Activated B cell treated with CpG ODN at 0.5 μM for 24 hours (primary cell): ENCODE measurements at regions of chrX and their contacts with region 1.

Region 1: GRCh38 chrX:2690856-2691542 is at the start of gene CD99:
- DNase-seq: peak; percentile 92
- ATAC-seq: peak; percentile 92
- H3K4me3 Mint-ChIP-seq: peak within 1 kb of the TSS; percentile 89
- H3K27ac Mint-ChIP-seq: peak within 1 kb of the TSS; percentile 82
- H3K4me1 Mint-ChIP-seq: peaks cover 43% of the 10 kb centered on the region
- H3K27me3 Mint-ChIP-seq: no peaks in the 10 kb centered on the region
- CTCF ChIP-seq: no peak
- total RNA-seq, gene CD99: 86.4 and 102 TPM in 2 replicates

Region 2: DNA sequence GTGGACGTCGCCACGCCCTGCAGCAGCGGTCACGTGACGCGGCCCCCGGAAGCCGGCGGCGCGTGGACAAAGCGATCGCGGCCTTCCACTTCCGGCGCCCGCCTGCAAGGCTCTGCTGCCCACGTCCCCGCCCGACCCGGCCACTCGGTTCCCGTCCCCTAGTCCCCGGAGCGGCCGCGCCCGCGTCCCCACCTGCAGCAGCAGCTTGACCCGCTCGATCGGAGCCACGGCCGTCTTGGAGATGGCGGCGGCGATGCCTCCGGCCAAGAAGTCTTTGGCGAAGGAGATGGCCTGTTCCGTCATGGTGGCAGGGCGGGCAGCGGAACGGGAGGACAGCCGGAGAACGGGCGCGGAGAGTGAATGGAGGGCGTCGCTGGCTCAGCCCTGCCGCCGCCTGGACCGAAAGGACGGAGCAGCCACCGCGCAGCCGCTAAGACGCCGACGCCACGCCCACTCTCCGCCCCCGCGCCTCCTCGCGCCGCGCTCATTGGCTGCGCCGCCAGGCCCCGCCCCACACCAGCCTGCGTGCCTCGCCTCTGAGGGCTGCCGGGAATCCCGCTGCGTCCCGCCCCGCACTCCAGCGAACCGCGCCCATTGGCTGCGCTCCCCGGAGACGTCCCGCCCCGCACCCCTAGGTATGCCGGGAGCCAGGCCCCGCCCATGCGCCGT is 1299.2 kb before region 1 on chrX and contains the start of gene SLC25A6:
- CTCF ChIA-PET with region 1: no interaction called
- POLR2A ChIA-PET with region 1: no interaction called
- intact Hi-C with region 1: loop called (anchors 5 kb)
- DNase-seq: peak; percentile 100
- ATAC-seq: peak; percentile 96
- H3K4me3 Mint-ChIP-seq: peak within 1 kb of the TSS; percentile 93
- H3K27ac Mint-ChIP-seq: peak within 1 kb of the TSS; percentile 93
- H3K4me1 Mint-ChIP-seq: peaks cover 47% of the 10 kb centered on the region
- H3K27me3 Mint-ChIP-seq: no peaks in the 10 kb centered on the region
- CTCF ChIP-seq: no peak
- total RNA-seq, gene SLC25A6: 436 and 472 TPM in 2 replicates

Region 3: GRCh38 chrX:2500267-2501075 is 190.5 kb before region 1 on chrX and contains the starts of genes DHRSX and ZBED1:
- CTCF ChIA-PET with region 1: no interaction called
- POLR2A ChIA-PET with region 1: no interaction called
- intact Hi-C with region 1: loop called (anchors 5 kb)
- DNase-seq: peak; percentile 63
- ATAC-seq: peak; percentile 77
- H3K4me3 Mint-ChIP-seq: peak within 1 kb of the TSS; percentile 82
- H3K27ac Mint-ChIP-seq: peak within 1 kb of the TSS; percentile 74
- H3K4me1 Mint-ChIP-seq: peaks cover 33% of the 10 kb centered on the region
- H3K27me3 Mint-ChIP-seq: no peaks in the 10 kb centered on the region
- CTCF ChIP-seq: no peak
- total RNA-seq, gene DHRSX: 23.2 and 28.3 TPM in 2 replicates
- total RNA-seq, gene ZBED1: 49.5 and 50.1 TPM in 2 replicates

Region 4: GRCh38 chrX:2707334-2707760 is 16.3 kb after region 1 on chrX:
- CTCF ChIA-PET with region 1: no interaction called
- POLR2A ChIA-PET with region 1: no interaction called
- intact Hi-C with region 1: loop called (anchors 1 kb)
- DNase-seq: peak; percentile 51
- ATAC-seq: peak; percentile 90
- H3K4me3 Mint-ChIP-seq: peak overlapping the region; percentile 69
- H3K27ac Mint-ChIP-seq: peak overlapping the region; percentile 93
- H3K4me1 Mint-ChIP-seq: peaks cover 71% of the 10 kb centered on the region
- H3K27me3 Mint-ChIP-seq: no peaks in the 10 kb centered on the region
- CTCF ChIP-seq: no peak

Region 5: DNA sequence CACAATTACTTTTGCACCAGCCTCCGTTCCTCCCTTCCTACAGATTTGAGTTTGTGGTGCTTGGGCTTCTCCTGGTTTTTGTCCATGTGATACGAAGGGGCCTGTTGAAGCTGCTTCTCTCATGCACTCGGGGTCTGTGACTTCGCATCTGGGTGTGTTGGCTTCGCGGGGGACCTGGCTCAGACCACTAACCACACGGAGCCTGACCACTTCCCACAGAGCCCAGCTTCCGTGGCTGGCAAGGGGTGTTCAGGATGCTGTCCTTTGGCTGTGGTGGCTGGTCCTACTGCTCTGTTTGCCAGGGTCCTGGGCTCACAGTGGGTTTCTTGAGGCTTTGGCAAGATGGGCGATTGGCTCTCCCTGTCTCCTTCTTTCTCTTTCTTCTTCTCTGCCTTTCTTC is 41.1 kb after region 1 on chrX:
- CTCF ChIA-PET with region 1: no interaction called
- POLR2A ChIA-PET with region 1: no interaction called
- intact Hi-C with region 1: loop called (anchors 5 kb)
- DNase-seq: no peak
- ATAC-seq: no peak
- H3K4me3 Mint-ChIP-seq: no peak overlapping the region
- H3K27ac Mint-ChIP-seq: no peak overlapping the region
- H3K4me1 Mint-ChIP-seq: no peaks in the 10 kb centered on the region
- H3K27me3 Mint-ChIP-seq: no peaks in the 10 kb centered on the region
- CTCF ChIP-seq: no peak

Region 6: DNA sequence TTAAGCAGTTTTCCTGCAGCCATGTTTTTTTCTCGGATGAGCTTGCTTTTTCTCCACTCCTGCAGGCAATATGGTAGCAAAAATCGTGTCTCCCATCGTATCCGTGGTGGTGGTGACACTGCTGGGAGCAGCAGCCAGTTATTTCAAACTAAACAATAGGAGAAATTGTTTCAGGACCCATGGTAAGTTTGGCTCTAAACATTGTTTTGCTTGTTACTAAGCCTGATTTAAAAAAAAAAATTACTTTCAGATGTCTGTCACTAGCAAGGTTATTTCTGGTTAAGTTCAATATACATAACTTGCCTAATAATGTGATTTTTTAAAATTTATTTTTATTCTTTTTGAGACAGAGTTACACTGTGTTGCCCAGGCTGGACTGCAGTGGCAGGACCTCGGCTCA is 120.3 kb after region 1 on chrX:
- CTCF ChIA-PET with region 1: no interaction called
- POLR2A ChIA-PET with region 1: no interaction called
- intact Hi-C with region 1: loop called (anchors 5 kb)
- DNase-seq: no peak
- ATAC-seq: no peak
- H3K4me3 Mint-ChIP-seq: no peak overlapping the region
- H3K27ac Mint-ChIP-seq: no peak overlapping the region
- H3K4me1 Mint-ChIP-seq: peaks cover 3% of the 10 kb centered on the region
- H3K27me3 Mint-ChIP-seq: peaks cover 11% of the 10 kb centered on the region
- CTCF ChIP-seq: no peak

Region 7: DNA sequence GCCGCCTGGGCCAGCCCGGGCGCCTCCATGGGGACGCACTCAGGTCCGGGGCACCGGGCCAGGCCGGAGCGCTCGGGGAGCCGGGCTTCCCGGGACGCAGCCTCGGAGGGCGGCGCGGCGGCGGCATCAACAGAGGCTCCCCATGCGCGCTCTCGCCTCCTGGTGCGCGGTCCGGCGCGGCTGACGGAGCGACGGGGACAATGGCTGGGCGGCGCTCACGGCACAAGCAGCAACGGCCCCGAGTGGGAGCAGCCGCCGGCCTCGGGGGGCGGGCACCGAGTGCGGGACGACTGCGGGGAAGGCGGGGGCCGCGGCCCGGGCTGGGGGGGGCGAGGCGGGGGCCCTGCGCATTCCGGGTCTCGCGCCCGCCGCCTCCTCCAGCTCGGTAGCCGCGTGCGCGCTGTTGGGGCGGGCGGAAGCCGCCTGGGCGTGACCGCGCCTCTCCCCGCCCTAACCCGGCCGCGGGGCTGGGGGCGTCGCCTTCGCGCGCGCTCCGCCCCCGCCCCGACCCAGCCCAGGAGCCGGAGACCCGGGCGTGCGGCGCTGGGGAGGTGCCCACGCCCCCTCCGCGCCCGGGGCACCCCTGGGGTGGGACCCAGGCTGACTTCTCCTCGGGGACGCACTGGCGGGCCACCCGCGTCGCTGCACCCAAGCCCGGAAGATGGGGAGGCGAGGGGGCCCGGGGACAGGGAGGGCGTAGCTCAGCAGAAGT is 1022.4 kb after region 1 on chrX and contains the start of gene PRKX:
- CTCF ChIA-PET with region 1: no interaction called
- POLR2A ChIA-PET with region 1: no interaction called
- intact Hi-C with region 1: loop called (anchors 5 kb)
- DNase-seq: peak; percentile 65
- ATAC-seq: peak; percentile 83
- H3K4me3 Mint-ChIP-seq: peak within 1 kb of the TSS; percentile 91
- H3K27ac Mint-ChIP-seq: peak within 1 kb of the TSS; percentile 73
- H3K4me1 Mint-ChIP-seq: peaks cover 20% of the 10 kb centered on the region
- H3K27me3 Mint-ChIP-seq: no peaks in the 10 kb centered on the region
- CTCF ChIP-seq: no peak
- total RNA-seq, gene PRKX: 23.9 and 24.3 TPM in 2 replicates